Esophagus muscularis mucosa (tissue), 4 donors: ENCODE measurements at regions of chr18 and their contacts with region 1.

Region 1: DNA sequence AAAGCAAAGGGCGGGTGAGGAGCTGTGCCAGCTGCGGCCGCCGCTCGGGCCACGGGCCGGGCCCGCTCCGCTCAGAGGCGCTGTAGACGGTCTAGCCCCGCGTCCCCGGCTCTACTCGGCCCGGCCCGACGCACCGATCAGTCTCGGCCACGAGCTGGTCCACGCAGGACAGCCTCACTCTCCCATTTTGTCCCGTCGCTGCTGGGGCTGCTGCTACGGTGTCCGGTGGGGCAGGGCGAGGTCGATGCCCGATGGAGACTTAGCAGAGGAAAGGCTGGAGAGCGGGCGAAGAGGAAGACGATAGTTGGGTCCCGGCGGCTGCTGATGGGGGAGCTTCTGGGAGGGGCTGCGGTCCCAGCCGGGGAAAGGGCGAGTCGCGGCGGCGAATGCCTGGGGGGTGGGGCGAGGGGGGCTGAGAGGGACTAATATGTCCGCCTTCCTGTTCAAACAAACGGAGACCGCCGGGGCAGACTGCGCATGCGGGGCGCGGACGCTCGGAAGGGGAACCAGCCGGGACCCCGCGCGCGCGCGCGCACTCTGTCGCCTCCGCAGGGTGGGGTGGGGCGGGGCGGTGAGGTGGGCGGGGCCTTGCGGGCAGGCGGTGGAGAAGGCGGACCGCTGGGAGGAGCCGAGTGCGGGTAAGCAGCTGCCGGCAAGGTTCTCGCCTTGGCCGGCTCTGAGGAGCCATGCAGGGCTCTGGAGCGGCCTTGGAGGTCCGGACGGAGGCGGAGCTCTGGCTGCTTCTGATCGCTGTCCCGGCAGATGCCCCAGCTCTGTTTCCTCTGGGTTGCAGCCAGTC is at the start of gene ROCK1:
- DNase-seq: peak; percentile 100
- H3K4me3 ChIP-seq: peak within 1 kb of the TSS; percentile 87 to 98 (median 90)
- H3K27ac ChIP-seq: peak within 1 kb of the TSS; percentile 95 to 98 (median 97)
- H3K4me1 ChIP-seq: peaks cover 24 to 42% (median 33%) of the 10 kb centered on the region in 4 donors
- H3K27me3 ChIP-seq: no peaks in the 10 kb centered on the region
- CTCF ChIP-seq: no peak
- EP300 ChIP-seq: no peak
- POLR2A ChIP-seq: peak; percentile 28
- total RNA-seq, gene ROCK1: 77.2 to 110 (median 106) TPM

Region 2: GRCh38 chr18:21004726-21005125 is 106.8 kb before region 1 on chr18:
- intact Hi-C with region 1: loop called (anchors 10 kb)
- DNase-seq: no peak
- H3K4me3 ChIP-seq: no peak overlapping the region
- H3K27ac ChIP-seq: peak overlapping the region; percentile 57 to 69 (median 64)
- H3K4me1 ChIP-seq: peaks cover 16 to 21% (median 19%) of the 10 kb centered on the region in 4 donors
- H3K27me3 ChIP-seq: no peaks in the 10 kb centered on the region
- CTCF ChIP-seq: no peak
- EP300 ChIP-seq: no peak
- POLR2A ChIP-seq: no peak

Region 3: DNA sequence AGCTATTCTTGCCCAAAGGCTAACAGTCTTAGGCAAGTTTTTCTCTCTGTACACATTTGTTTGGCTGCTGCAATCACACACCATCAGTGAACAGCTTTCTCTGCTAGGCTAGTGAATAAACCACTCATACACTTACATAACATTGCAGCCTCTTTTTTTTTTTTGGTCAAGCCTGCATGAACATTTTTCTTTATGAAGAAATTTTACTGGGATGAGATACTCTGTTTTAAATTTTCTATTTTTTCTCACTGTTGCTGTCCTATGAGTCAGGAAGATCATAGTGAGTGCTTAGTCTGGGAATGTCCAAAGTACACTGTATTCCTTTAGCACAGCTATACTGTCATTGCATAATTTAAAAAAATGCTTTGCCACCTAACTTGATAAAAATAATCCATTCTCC is 58.4 kb before region 1 on chr18:
- intact Hi-C with region 1: loop called (anchors 5 kb)
- DNase-seq: no peak
- H3K4me3 ChIP-seq: no peak overlapping the region
- H3K27ac ChIP-seq: peak overlapping the region; percentile 59 to 73 (median 67)
- H3K4me1 ChIP-seq: peaks cover 36 to 71% (median 62%) of the 10 kb centered on the region in 4 donors
- H3K27me3 ChIP-seq: no peaks in the 10 kb centered on the region
- CTCF ChIP-seq: no peak
- EP300 ChIP-seq: no peak
- POLR2A ChIP-seq: no peak

Region 4: DNA sequence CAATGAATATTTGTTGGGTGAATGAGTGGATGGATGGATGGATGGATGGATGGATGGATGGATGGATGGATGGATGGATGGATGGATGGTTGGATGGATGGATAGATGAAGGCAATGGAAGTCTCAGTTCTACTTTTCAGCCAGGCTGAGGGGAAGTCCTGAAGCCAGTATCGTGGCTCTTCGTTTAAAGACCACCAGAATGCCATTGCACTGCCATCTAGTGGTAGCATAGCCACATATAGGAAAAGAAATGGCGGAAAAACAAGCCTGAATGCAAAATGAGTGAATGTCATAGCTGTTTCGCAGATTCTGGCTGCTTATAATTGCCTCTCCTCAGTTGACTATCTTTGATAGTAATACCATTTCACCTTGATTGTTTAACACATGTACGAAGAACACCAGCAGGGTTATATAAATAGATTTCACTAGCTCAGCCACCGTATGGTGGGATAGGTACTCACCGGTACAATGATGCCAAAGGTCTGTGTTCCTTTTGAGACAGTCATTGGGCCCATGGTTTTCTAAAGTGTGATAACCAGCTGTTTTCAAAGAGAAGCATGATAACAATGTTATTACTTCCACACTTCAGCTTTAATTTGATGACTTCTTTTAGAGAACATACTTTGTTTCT is 68.2 kb after region 1 on chr18:
- intact Hi-C with region 1: loop called (anchors 5 kb)
- DNase-seq: no peak
- H3K4me3 ChIP-seq: no peak overlapping the region
- H3K27ac ChIP-seq: no peak overlapping the region
- H3K4me1 ChIP-seq: peaks cover 0 to 7% (median 0%) of the 10 kb centered on the region in 4 donors
- H3K27me3 ChIP-seq: no peaks in the 10 kb centered on the region
- CTCF ChIP-seq: peak; percentile 65 to 79 (median 71)
- EP300 ChIP-seq: no peak
- POLR2A ChIP-seq: no peak

Region 5: GRCh38 chr18:21194871-21195771 is 83.6 kb after region 1 on chr18:
- intact Hi-C with region 1: no loop called
- DNase-seq: no peak
- H3K4me3 ChIP-seq: no peak overlapping the region
- H3K27ac ChIP-seq: no peak overlapping the region
- H3K4me1 ChIP-seq: peaks cover 0 to 4% (median 0%) of the 10 kb centered on the region in 4 donors
- H3K27me3 ChIP-seq: no peaks in the 10 kb centered on the region
- CTCF ChIP-seq: peak; percentile 73 to 76 (median 74)
- EP300 ChIP-seq: no peak
- POLR2A ChIP-seq: no peak